Psoas muscle (tissue), 8 donors: ENCODE measurements at regions of chr18 and their contacts with region 1.

Region 1: DNA sequence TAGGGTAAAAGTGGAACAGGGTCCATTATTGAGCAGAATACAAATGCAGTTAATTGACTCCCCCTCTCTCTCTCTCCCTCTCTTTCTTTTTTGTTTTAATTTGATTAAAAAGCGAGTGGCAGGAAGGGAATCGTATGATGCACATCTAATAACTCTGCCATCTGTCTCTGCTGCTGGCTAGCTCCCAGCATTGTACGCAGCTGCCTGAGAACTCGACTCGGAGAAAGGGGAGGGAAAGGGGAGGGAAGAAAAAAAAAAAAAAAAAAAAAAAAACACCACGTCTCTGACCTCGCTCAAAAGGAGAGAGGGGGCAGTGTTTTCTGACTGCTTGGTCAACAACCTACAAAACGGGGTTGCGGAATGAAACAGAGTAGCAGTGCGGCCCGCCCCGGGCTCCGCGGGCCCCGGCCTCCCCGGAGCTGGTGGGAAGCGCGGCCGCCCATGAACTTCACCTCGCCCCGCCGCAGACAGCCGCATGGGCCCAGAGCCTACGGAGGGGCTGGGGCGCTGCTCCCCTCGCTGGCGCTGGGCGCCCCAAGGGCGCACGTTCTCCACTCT is 265.7 kb downstream of the TCF4 start:
- DNase-seq: peak; percentile 90 to 94
- ATAC-seq: peak; percentile 87 to 93 (median 89)
- H3K4me3 ChIP-seq: peak overlapping the region; percentile 77
- H3K27ac ChIP-seq: peak overlapping the region; percentile 89
- H3K4me1 ChIP-seq: peaks cover 40% of the 10 kb centered on the region
- H3K27me3 ChIP-seq: no peaks in the 10 kb centered on the region
- CTCF ChIP-seq: peak; percentile 8

Region 2: DNA sequence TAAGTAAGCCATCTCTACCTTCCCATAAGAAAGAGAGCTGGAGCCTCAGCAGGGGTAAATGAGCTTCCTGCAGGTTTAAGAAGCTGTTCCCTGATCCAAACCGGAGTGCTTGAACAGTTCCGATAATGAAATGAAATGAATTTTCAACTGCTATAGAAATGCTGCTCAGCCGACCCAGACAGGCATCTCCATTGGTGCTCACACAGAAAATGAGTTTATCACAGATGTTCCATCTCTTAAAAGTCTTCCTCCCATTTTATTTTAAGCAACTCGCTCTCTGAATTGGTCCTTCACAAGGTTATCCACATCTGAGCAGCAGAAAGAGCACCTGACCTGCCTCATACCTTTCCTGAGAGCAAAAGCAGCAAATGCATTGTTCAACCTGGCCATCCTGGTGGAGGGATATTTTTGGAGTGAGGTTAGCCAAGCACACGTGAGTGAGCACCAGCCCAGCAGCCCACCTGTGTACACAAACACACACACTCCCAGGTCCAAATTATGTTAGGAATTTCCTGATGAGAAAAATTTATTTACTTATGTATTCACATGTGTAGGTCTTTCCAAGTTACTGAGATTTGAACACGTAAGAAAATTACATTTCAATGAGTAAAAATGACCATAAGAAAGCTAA is 320.7 kb before region 1 on chr18:
- intact Hi-C with region 1: no loop called
- DNase-seq: no peak
- ATAC-seq: no peak
- H3K4me3 ChIP-seq: no peak overlapping the region
- H3K27ac ChIP-seq: no peak overlapping the region
- H3K4me1 ChIP-seq: no peaks in the 10 kb centered on the region
- H3K27me3 ChIP-seq: no peaks in the 10 kb centered on the region
- CTCF ChIP-seq: no peak

Region 3: GRCh38 chr18:55096261-55096951 is 225.9 kb before region 1 on chr18:
- intact Hi-C with region 1: loop called in 1 of 2 experiments (anchors 10 kb)
- DNase-seq: peak in 1 of 2 donors; percentile 53
- ATAC-seq: peak in 3 of 4 donors; percentile 57 to 70 (median 59)
- H3K4me3 ChIP-seq: no peak overlapping the region
- H3K27ac ChIP-seq: no peak overlapping the region
- H3K4me1 ChIP-seq: no peaks in the 10 kb centered on the region
- H3K27me3 ChIP-seq: no peaks in the 10 kb centered on the region
- CTCF ChIP-seq: peak; percentile 34

Region 4: GRCh38 chr18:55243857-55244256 is 78.4 kb before region 1 on chr18:
- intact Hi-C with region 1: loop called in 1 of 2 experiments (anchors 5 kb)
- DNase-seq: no peak
- ATAC-seq: peak; percentile 9 to 62 (median 36)
- H3K4me3 ChIP-seq: no peak overlapping the region
- H3K27ac ChIP-seq: peak overlapping the region; percentile 50
- H3K4me1 ChIP-seq: peaks cover 40% of the 10 kb centered on the region
- H3K27me3 ChIP-seq: no peaks in the 10 kb centered on the region
- CTCF ChIP-seq: no peak

Region 5: DNA sequence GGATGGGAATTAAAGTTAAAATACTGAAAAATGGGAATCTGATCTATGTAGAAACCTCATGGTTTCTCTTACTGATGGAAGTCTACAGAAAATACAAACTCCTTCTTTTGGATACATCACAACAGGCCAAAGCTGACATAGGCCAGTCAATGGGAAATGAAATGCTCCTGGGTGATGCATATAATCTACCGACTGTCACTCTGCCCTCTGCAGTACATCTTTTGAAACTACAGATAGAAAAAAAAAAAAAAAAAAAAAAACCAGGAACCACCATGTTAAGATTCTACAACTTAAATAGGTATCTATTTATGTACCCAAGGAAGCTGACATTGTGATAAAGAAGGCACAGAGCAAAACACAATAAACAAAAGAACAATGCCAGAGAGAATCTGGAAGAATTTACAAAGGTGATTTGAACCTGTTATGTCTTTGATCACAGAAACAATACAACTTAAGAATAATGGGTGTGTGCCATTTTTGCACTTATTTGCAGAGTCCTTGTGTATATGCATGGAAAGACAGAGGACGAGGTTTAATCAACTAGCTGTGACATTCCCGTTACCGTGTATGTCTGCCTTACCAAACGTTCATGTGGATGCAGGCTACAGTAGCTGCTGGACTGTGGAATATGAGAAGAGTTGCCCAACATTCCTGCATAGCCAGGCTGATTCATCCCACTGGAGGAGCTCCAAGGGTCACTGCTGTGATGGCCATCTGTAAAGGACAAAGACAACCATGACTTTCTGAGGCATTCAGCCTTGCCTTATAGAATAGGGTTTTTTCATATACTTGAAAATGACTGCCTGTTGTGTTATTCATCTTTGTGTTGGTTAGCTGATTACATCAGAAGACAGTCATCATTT is 47.0 kb before region 1 on chr18:
- intact Hi-C with region 1: loop called (anchors 5 kb)
- DNase-seq: peak; percentile 73 to 87
- ATAC-seq: peak; percentile 97 to 99 (median 99)
- H3K4me3 ChIP-seq: no peak overlapping the region
- H3K27ac ChIP-seq: peak overlapping the region; percentile 72
- H3K4me1 ChIP-seq: peaks cover 24% of the 10 kb centered on the region
- H3K27me3 ChIP-seq: no peaks in the 10 kb centered on the region
- CTCF ChIP-seq: peak; percentile 29

Region 6: DNA sequence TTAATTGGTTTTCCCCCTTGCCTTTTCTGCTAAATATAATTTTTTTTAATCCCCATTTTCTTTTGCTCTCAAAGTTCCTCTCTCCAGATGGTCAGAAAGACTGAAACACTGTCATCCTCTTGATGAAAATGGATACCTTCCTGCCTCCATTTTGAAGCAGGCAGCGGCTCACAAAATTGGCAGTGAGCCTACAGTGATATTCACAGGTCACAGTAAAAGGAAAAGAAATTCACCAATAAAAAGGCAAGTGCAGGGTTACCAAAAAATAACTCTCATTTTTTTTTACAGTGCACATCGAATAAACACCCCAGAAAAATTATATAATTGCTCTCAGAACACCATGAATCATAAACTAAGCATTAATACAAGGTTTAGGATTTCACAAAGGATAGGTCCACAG is 41.8 kb before region 1 on chr18:
- intact Hi-C with region 1: loop called (anchors 5 kb)
- DNase-seq: no peak
- ATAC-seq: peak in 2 of 4 donors; percentile 23 to 27
- H3K4me3 ChIP-seq: no peak overlapping the region
- H3K27ac ChIP-seq: no peak overlapping the region
- H3K4me1 ChIP-seq: peaks cover 38% of the 10 kb centered on the region
- H3K27me3 ChIP-seq: no peaks in the 10 kb centered on the region
- CTCF ChIP-seq: no peak

Region 7: GRCh38 chr18:55376387-55376786 is 54.1 kb after region 1 on chr18:
- intact Hi-C with region 1: no loop called
- DNase-seq: no peak
- ATAC-seq: no peak
- H3K4me3 ChIP-seq: no peak overlapping the region
- H3K27ac ChIP-seq: no peak overlapping the region
- H3K4me1 ChIP-seq: peaks cover 4% of the 10 kb centered on the region
- H3K27me3 ChIP-seq: no peaks in the 10 kb centered on the region
- CTCF ChIP-seq: no peak

Region 8: GRCh38 chr18:55405893-55406406 is 83.7 kb after region 1 on chr18:
- intact Hi-C with region 1: loop called (anchors 5 kb)
- DNase-seq: peak; percentile 90 to 94
- ATAC-seq: peak; percentile 84 to 93 (median 92)
- H3K4me3 ChIP-seq: peak overlapping the region; percentile 64
- H3K27ac ChIP-seq: peak overlapping the region; percentile 79
- H3K4me1 ChIP-seq: peaks cover 25% of the 10 kb centered on the region
- H3K27me3 ChIP-seq: no peaks in the 10 kb centered on the region
- CTCF ChIP-seq: peak; percentile 36

Region 9: GRCh38 chr18:56575819-56576663 is 1253.8 kb after region 1 on chr18:
- intact Hi-C with region 1: loop called in 1 of 2 experiments (anchors 10 kb)
- DNase-seq: no peak
- ATAC-seq: peak in 3 of 4 donors; percentile 52 to 91 (median 65)
- H3K4me3 ChIP-seq: no peak overlapping the region
- H3K27ac ChIP-seq: no peak overlapping the region
- H3K4me1 ChIP-seq: peaks cover 15% of the 10 kb centered on the region
- H3K27me3 ChIP-seq: peaks cover 0 to 3% (median 0%) of the 10 kb centered on the region in 3 donors
- CTCF ChIP-seq: peak; percentile 72